Prostate gland (tissue), 2 donors: ENCODE measurements at regions of chr3 and their contacts with region 1.

Region 1: GRCh38 chr3:172129870-172130683 is 90.7 kb downstream of the FNDC3B start:
- DNase-seq: peak; percentile 79
- H3K4me3 ChIP-seq: no peak overlapping the region
- H3K27ac ChIP-seq: peak overlapping the region; percentile 49 to 64
- H3K4me1 ChIP-seq: peaks cover 12% of the 10 kb centered on the region
- H3K27me3 ChIP-seq: no peaks in the 10 kb centered on the region
- CTCF ChIP-seq: no peak
- POLR2A ChIP-seq: no peak

Region 2: GRCh38 chr3:171890398-171890797 is 239.7 kb before region 1 on chr3:
- intact Hi-C with region 1: no loop called
- DNase-seq: no peak
- H3K4me3 ChIP-seq: no peak overlapping the region
- H3K27ac ChIP-seq: no peak overlapping the region
- H3K4me1 ChIP-seq: no peaks in the 10 kb centered on the region
- H3K27me3 ChIP-seq: peaks cover 2% of the 10 kb centered on the region
- CTCF ChIP-seq: no peak
- POLR2A ChIP-seq: no peak

Region 3: GRCh38 chr3:172256101-172256734 is 126.1 kb after region 1 on chr3:
- intact Hi-C with region 1: loop called (anchors 5 kb)
- DNase-seq: no peak
- H3K4me3 ChIP-seq: no peak overlapping the region
- H3K27ac ChIP-seq: peak overlapping the region; percentile 29 to 57
- H3K4me1 ChIP-seq: no peaks in the 10 kb centered on the region
- H3K27me3 ChIP-seq: no peaks in the 10 kb centered on the region
- CTCF ChIP-seq: no peak
- POLR2A ChIP-seq: no peak

Region 4: DNA sequence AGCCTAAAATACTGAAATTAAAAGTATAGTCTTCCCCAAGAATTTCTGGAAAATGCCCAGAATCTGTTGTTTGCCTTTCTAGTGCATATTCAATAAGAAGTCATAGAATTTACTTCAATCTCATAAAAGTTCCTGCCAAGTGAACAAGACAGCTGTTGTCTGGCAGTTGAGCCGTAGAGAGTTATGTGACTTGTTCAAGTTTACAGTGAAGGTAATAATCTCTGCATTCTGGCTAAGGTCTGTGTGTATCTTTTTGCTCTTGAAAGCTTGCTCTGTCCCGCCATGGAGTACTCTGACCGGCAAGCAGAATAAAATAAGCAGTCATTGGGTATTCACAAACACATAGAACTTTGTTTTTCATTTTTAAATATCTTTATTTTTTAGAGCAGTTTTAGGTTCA is 240.3 kb after region 1 on chr3:
- intact Hi-C with region 1: no loop called
- DNase-seq: peak; percentile 47
- H3K4me3 ChIP-seq: no peak overlapping the region
- H3K27ac ChIP-seq: no peak overlapping the region
- H3K4me1 ChIP-seq: no peaks in the 10 kb centered on the region
- H3K27me3 ChIP-seq: no peaks in the 10 kb centered on the region
- CTCF ChIP-seq: no peak
- POLR2A ChIP-seq: no peak